ENCODE measurements at regions of chr18 and their contacts with region 1.

Region 1: GRCh38 chr18:34976899-34977837 is 64.0 kb upstream of the MAPRE2 start:
- DNase-seq: peak; percentile 77
- ATAC-seq: peak; percentile 76
- H3K4me3 Mint-ChIP-seq: peak overlapping the region; percentile 89
- H3K27ac Mint-ChIP-seq: no peak overlapping the region
- H3K4me1 Mint-ChIP-seq: peaks cover 23% of the 10 kb centered on the region
- H3K27me3 Mint-ChIP-seq: peaks cover 18% of the 10 kb centered on the region
- CTCF ChIP-seq: no peak

Region 2: GRCh38 chr18:34993289-34993688 is 16.1 kb after region 1 on chr18:
- CTCF ChIA-PET with region 1: no interaction called
- POLR2A ChIA-PET with region 1: no interaction called
- intact Hi-C with region 1: loop called (anchors 2 kb)
- DNase-seq: no peak
- ATAC-seq: no peak
- H3K4me3 Mint-ChIP-seq: no peak overlapping the region
- H3K27ac Mint-ChIP-seq: no peak overlapping the region
- H3K4me1 Mint-ChIP-seq: peaks cover 2% of the 10 kb centered on the region
- H3K27me3 Mint-ChIP-seq: peaks cover 10% of the 10 kb centered on the region
- CTCF ChIP-seq: no peak

Region 3: DNA sequence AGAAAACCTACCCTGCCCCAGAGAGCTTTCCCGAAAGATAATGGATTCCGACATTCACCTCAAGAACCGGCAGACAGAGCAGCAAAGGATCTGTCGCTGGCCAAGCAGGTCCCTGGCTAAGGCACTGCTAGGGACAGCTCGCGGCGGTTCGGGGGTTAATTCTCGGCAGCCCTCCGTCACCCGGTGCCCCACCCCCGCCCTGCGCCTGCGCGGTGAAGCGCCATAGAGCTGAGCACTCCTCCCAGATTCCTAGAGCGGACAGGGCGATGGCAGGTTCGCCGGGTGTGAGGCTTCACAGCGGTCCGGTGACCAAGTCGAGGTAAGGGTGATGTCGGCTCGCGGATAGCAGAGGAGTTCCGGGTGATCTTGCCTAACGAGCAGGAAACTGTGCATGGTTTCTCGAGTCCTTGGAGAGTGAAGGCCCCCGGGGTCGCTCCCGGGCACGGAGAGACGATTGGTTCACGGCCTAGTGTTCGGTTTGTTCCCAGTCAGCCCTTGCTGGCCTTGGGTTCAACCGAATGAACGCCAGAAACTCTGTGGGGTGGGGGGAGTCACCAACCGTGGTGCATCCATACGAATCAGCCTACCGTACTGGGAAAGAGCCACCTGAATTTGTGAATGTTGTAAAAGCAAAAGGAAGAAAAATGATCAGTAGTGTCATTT is 313.0 kb after region 1 on chr18 and contains the start of gene ZSCAN30:
- CTCF ChIA-PET with region 1: no interaction called
- POLR2A ChIA-PET with region 1: no interaction called
- intact Hi-C with region 1: loop called (anchors 2 kb)
- DNase-seq: peak; percentile 92
- ATAC-seq: peak; percentile 97
- H3K4me3 Mint-ChIP-seq: peak within 1 kb of the TSS; percentile 100
- H3K27ac Mint-ChIP-seq: peak within 1 kb of the TSS; percentile 99
- H3K4me1 Mint-ChIP-seq: peaks cover 51% of the 10 kb centered on the region
- H3K27me3 Mint-ChIP-seq: peaks cover 2% of the 10 kb centered on the region
- CTCF ChIP-seq: no peak
- total RNA-seq, gene ZSCAN30: 21.2 and 23.8 TPM in 2 replicates

Region 4: GRCh38 chr18:35616664-35617423 is 639.7 kb after region 1 on chr18:
- CTCF ChIA-PET with region 1: no interaction called
- POLR2A ChIA-PET with region 1: no interaction called
- intact Hi-C with region 1: loop called (anchors 10 kb)
- DNase-seq: peak; percentile 24
- ATAC-seq: peak; percentile 93
- H3K4me3 Mint-ChIP-seq: no peak overlapping the region
- H3K27ac Mint-ChIP-seq: no peak overlapping the region
- H3K4me1 Mint-ChIP-seq: peaks cover 12% of the 10 kb centered on the region
- H3K27me3 Mint-ChIP-seq: no peaks in the 10 kb centered on the region
- CTCF ChIP-seq: no peak

Region 5: GRCh38 chr18:36828630-36829361 is 1851.6 kb after region 1 on chr18 and contains the starts of genes KIAA1328 and TPGS2:
- CTCF ChIA-PET with region 1: no interaction called
- POLR2A ChIA-PET with region 1: no interaction called
- intact Hi-C with region 1: loop called (anchors 10 kb)
- DNase-seq: peak; percentile 88
- ATAC-seq: peak; percentile 91
- H3K4me3 Mint-ChIP-seq: peak within 1 kb of the TSS; percentile 94
- H3K27ac Mint-ChIP-seq: peak within 1 kb of the TSS; percentile 84
- H3K4me1 Mint-ChIP-seq: peaks cover 31% of the 10 kb centered on the region
- H3K27me3 Mint-ChIP-seq: no peaks in the 10 kb centered on the region
- CTCF ChIP-seq: no peak
- total RNA-seq, gene KIAA1328: 11.7 and 12.9 TPM in 2 replicates
- total RNA-seq, gene TPGS2: 42.1 and 45.1 TPM in 2 replicates

Measured in activated B cell treated with CpG ODN at 0.5 μM for 24 hours (primary cell).